K562 (cell line): ENCODE measurements at regions of chr10 and their contacts with region 1.

Region 1: GRCh38 chr10:44386546-44387052 is 1.7 kb upstream of the CXCL12 start:
- DNase-seq: peak; percentile 65 to 89 (median 88)
- ATAC-seq: peak; percentile 99
- H3K4me3 ChIP-seq: no peak overlapping the region
- H3K27ac ChIP-seq: no peak overlapping the region
- H3K4me1 ChIP-seq: peaks cover 0 to 21% of the 10 kb centered on the region in 2 experiments; a peak in 2 of 5 replicates
- H3K27me3 ChIP-seq: peaks cover 16 to 53% of the 10 kb centered on the region in 2 experiments; a peak in 3 of 5 replicates
- CTCF ChIP-seq: peak; percentile 84 to 92 (median 92)
- EP300 ChIP-seq: no peak
- POLR2A ChIP-seq: no peak
- RAD21 ChIP-seq: peak; percentile 81 to 82

Region 2: DNA sequence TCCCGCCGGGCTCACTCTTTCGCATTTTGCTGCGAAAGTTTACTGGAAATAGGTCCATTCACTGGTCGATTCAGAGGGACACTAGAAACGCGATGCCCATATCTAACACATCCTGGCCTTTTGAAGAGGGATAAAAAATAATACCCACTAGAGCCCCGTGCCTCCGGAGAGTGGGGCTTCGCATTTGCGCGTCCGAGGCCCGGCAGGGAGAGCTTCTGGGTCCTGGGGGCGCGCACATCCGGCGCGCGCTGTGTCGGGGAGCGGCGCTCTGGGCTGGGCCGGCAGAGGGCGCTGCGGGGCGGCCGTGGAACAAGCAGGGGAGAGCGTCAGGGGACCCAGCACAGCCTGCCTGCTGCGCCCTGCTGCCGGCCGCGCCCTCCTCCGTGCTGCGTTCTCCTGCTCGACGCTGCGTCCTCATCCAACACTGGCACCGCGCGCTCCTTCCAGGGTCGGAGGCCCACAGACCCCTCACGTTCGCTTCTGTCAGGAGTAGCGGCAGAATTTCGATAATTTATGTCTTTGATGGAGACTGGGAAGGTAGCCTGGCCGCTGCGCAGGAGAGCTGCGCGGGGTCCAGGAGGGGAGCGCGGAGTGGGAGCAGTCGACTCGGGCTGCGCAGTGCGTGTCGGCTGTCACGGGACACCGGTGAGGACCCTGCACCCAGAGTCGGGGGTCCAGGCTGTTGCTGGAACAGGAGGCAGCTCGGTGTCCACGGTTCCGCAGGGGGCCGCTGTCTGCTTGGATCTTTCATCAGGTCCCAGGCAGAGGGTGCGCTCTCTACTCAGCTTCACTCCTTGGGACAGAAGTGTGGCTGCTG is 696.4 kb before region 1 on chr10:
- CTCF ChIA-PET with region 1: no interaction called
- POLR2A ChIA-PET with region 1: no interaction called
- in situ Hi-C with region 1: no loop called
- intact Hi-C with region 1: loop called (anchors 5 kb)
- DNase-seq: peak; percentile 89 to 92 (median 92)
- ATAC-seq: peak; percentile 99
- H3K4me3 ChIP-seq: peak overlapping the region; percentile 31
- H3K27ac ChIP-seq: no peak overlapping the region
- H3K4me1 ChIP-seq: peaks cover 0 to 22% of the 10 kb centered on the region in 2 experiments; a peak in 2 of 5 replicates
- H3K27me3 ChIP-seq: peaks cover 21 to 59% of the 10 kb centered on the region in 2 experiments
- CTCF ChIP-seq: peak; percentile 87 to 92 (median 87)
- EP300 ChIP-seq: no peak
- POLR2A ChIP-seq: no peak
- RAD21 ChIP-seq: peak; percentile 78

Region 3: DNA sequence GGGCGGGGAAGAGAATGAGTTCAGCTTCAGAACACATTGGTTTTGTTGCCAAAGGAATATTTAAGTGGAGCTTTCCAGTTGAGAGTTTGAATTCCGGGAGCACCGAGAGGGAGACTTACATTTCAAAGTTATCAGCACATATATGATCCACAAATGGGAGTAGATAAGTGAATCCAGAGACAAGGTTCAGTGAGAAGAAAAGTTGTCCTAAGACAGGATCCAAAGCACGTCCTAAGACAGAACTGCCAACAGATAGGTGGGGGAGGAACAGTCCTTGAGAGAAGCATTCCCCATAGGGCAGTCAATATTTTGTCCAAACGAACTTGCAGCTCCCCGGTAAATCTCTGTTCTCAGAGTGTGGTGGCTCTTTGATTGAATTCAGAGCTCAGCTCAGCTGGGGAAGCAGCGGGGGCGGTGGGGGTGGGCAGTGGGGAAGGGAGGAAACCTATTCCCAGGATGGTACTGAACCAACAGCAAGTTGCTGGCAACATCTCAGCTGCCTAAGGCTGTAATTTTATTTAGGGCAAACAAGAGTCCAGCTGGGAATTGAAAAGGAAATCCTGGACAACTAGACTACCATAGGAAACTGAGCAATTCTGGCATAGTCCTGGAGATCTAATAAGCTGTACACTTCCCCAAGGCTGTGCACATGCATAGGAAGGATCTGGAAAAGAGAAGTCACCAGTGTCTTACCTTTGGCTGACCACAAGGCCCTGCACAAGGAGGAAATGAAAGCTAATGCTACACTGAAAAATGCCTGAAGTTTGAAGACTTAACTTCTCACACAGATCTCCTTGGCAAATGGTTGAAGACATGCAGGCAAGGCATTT is 92.5 kb after region 1 on chr10:
- CTCF ChIA-PET with region 1: no interaction called
- POLR2A ChIA-PET with region 1: no interaction called
- in situ Hi-C with region 1: no loop called
- intact Hi-C with region 1: no loop called
- DNase-seq: no peak
- ATAC-seq: no peak
- H3K4me3 ChIP-seq: no peak overlapping the region
- H3K27ac ChIP-seq: no peak overlapping the region
- H3K4me1 ChIP-seq: peaks cover 5 to 23% of the 10 kb centered on the region in 2 experiments; a peak in 4 of 5 replicates
- H3K27me3 ChIP-seq: no peaks in the 10 kb centered on the region
- CTCF ChIP-seq: no peak
- EP300 ChIP-seq: no peak
- POLR2A ChIP-seq: no peak
- RAD21 ChIP-seq: no peak

Region 4: DNA sequence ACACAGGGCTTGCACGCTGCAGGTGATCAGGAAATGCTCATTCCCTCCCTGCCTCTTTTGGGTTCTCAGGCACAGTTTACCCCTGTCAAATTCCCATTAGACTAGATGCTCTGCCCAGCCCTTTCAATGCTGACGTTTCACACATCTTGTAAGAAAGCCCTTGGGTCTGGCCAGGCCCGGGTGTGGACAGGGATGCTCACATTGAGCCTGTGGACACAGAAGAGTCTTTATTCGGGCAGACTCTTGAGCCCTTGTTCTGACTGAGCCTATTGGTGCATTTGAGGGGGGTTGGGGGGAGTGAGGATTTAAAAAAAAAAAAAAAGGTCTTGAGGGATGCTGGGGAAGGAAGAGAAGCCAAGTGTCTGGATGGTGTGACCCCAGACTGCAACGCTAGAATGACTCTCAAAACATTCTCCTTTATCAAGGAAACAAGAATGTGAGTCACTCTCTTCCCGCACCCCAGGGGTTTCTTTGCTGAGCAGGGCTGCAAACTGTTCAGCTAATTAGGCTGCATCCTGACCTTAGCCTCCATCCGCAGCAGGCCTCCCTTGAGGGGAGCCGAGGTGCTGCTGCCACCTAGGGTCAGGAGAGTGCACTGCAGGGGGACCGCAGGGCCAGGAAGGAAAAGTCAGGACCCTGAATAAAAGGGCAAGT is 470.9 kb after region 1 on chr10:
- CTCF ChIA-PET with region 1: no interaction called
- POLR2A ChIA-PET with region 1: no interaction called
- in situ Hi-C with region 1: no loop called
- intact Hi-C with region 1: loop called (anchors 5 kb)
- DNase-seq: peak; percentile 68 to 88 (median 84)
- ATAC-seq: peak; percentile 92
- H3K4me3 ChIP-seq: no peak overlapping the region
- H3K27ac ChIP-seq: no peak overlapping the region
- H3K4me1 ChIP-seq: no peaks in the 10 kb centered on the region
- H3K27me3 ChIP-seq: peaks cover 0 to 14% of the 10 kb centered on the region in 2 experiments; a peak in 3 of 5 replicates
- CTCF ChIP-seq: peak; percentile 88 to 99 (median 89)
- EP300 ChIP-seq: no peak
- POLR2A ChIP-seq: no peak
- RAD21 ChIP-seq: peak; percentile 72 to 86